Right lobe of liver (tissue), 6 donors: ENCODE measurements at regions of chr14 and their contacts with region 1.

Region 1: GRCh38 chr14:74249433-74250375 is 10.5 kb downstream of the VSX2 start:
- DNase-seq: no peak
- ATAC-seq: peak in 1 of 4 donors; percentile 15
- H3K4me3 ChIP-seq: no peak overlapping the region
- H3K27ac ChIP-seq: no peak overlapping the region
- H3K4me1 ChIP-seq: no peaks in the 10 kb centered on the region
- H3K27me3 ChIP-seq: no peaks in the 10 kb centered on the region
- CTCF ChIP-seq: no peak
- POLR2A ChIP-seq: no peak

Region 2: DNA sequence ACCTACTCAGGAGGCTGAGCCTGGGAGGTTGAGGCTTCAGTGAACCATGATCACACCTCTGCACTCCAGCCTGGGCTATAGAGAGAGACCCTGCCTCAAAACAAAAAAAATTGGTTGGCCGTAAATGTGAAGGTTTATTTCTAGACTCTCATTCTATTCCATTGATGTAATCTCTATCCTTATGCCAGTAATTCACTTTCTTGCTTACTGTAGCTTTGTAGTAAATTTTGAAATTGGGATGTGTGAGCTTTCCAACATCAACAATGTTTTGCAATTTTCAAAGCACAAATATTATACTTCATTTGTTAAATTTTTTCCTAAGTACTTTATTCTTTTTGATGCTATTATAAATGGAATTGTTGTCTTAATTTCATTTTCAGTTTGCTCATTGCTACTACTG is 140.3 kb before region 1 on chr14:
- intact Hi-C with region 1: loop called (anchors 5 kb)
- DNase-seq: no peak
- ATAC-seq: no peak
- H3K4me3 ChIP-seq: no peak overlapping the region
- H3K27ac ChIP-seq: no peak overlapping the region
- H3K4me1 ChIP-seq: no peaks in the 10 kb centered on the region
- H3K27me3 ChIP-seq: no peaks in the 10 kb centered on the region
- CTCF ChIP-seq: no peak
- POLR2A ChIP-seq: no peak

Region 3: DNA sequence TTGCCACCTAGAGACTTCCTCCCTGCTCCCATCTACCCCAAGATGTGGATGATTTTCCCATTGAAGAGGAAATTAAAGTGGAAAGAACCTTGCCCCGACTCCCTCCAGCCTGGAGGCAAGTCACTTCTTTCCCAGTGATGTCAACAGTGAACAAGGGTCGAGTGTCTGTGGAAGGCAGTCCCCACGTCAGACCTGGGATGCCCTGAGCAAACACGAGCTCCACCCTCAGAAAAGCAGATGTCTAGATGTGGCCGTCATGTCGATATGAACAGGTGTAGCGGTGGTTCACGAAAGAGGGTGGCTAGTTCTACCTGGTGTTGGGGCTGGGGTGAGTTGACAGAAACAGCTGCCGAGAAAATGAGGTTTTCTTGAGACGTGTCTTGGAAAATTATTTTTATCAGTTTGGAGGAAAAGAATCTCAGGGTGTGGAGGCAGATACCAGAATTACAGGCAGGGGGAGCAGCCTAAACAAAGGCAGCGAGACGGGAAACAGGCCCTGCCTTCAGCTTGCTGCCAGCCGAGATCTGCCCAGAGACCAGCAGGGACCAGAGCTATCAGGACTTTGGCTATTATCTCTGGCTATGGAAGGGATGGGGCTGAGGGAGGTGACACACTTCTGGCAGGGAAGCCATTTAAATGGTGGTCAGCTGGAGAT is 150.5 kb after region 1 on chr14:
- intact Hi-C with region 1: no loop called
- DNase-seq: no peak
- ATAC-seq: no peak
- H3K4me3 ChIP-seq: no peak overlapping the region
- H3K27ac ChIP-seq: no peak overlapping the region
- H3K4me1 ChIP-seq: no peaks in the 10 kb centered on the region
- H3K27me3 ChIP-seq: no peaks in the 10 kb centered on the region
- CTCF ChIP-seq: no peak
- POLR2A ChIP-seq: no peak